OCI-LY7 (cell line): ENCODE measurements at regions of chr22 and their contacts with region 1.

Region 1: GRCh38 chr22:28791841-28792490 is 8.4 kb downstream of the XBP1 start:
- DNase-seq: peak; percentile 95
- H3K4me3 ChIP-seq: peak overlapping the region; percentile 33
- H3K27ac ChIP-seq: peak overlapping the region; percentile 58
- H3K4me1 ChIP-seq: peaks cover 33% of the 10 kb centered on the region
- CTCF ChIP-seq: no peak

Region 2: GRCh38 chr22:27990879-27991278 is 801.1 kb before region 1 on chr22:
- CTCF ChIA-PET with region 1: no interaction called
- POLR2A ChIA-PET with region 1: no interaction called
- intact Hi-C with region 1: loop called (anchors 2 kb)
- DNase-seq: peak; percentile 67
- H3K4me3 ChIP-seq: peak overlapping the region; percentile 47
- H3K27ac ChIP-seq: peak overlapping the region; percentile 96
- H3K4me1 ChIP-seq: peaks cover 88% of the 10 kb centered on the region
- CTCF ChIP-seq: peak; percentile 77

Region 3: GRCh38 chr22:28817919-28818909 is 26.2 kb after region 1 on chr22:
- CTCF ChIA-PET with region 1: no interaction called
- POLR2A ChIA-PET with region 1: interaction called, 7 read pairs
- intact Hi-C with region 1: loop called (anchors 1 kb)
- DNase-seq: peak; percentile 46
- H3K4me3 ChIP-seq: no peak overlapping the region
- H3K27ac ChIP-seq: peak overlapping the region; percentile 7
- H3K4me1 ChIP-seq: peaks cover 46% of the 10 kb centered on the region
- CTCF ChIP-seq: no peak

Region 4: GRCh38 chr22:28829358-28830181 is 37.6 kb after region 1 on chr22:
- CTCF ChIA-PET with region 1: no interaction called
- POLR2A ChIA-PET with region 1: interaction called, 7 read pairs
- intact Hi-C with region 1: loop called (anchors 1 kb)
- DNase-seq: peak; percentile 84
- H3K4me3 ChIP-seq: no peak overlapping the region
- H3K27ac ChIP-seq: no peak overlapping the region
- H3K4me1 ChIP-seq: peaks cover 5% of the 10 kb centered on the region
- CTCF ChIP-seq: peak; percentile 99

Region 5: DNA sequence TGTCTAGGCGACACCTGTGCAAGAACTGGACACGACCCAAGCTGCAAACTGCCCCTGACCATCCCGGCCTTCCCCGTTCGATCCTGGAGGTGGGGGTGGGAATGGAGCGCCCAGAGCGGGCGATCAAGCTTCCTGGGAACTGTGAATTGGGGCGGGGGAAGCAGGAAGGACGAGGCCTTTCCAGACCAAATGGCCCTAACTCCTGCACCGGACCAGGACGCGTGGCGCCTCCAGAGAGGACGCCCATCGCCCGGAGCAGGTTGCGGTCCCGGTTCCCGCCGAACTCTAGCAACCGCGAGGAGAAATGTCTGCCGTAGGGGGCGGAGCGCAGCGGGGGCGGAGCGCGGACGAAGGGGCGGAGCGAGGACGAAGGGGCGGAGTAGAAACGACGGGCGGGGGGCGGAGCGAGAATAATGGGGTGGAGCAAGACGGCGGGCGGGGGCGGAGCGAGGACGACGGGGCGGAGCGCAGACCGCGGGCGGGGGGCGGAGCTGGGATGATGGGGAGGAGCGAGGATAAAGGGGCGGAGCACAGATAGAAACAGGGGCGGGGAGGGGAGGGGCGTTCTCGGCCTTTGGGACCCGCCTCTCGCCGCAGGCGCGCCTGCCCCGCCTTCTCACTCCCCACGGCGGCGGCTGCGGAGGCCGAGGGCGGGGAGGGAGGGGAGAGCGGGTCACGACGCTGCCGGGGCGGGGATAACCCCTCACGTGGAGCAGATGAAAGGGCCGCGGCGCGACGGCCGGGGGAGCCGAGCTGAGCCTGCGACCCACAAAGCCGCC is 91.1 kb after region 1 on chr22 and contains the start of gene ZNRF3:
- CTCF ChIA-PET with region 1: no interaction called
- POLR2A ChIA-PET with region 1: no interaction called
- intact Hi-C with region 1: loop called (anchors 5 kb)
- DNase-seq: peak; percentile 90
- H3K4me3 ChIP-seq: peak within 1 kb of the TSS; percentile 69
- H3K27ac ChIP-seq: no peak within 1 kb of the TSS
- H3K4me1 ChIP-seq: peaks cover 15% of the 10 kb centered on the region
- CTCF ChIP-seq: no peak
- total RNA-seq, gene ZNRF3: 1.2 and 3.6 TPM in 2 replicates

Region 6: DNA sequence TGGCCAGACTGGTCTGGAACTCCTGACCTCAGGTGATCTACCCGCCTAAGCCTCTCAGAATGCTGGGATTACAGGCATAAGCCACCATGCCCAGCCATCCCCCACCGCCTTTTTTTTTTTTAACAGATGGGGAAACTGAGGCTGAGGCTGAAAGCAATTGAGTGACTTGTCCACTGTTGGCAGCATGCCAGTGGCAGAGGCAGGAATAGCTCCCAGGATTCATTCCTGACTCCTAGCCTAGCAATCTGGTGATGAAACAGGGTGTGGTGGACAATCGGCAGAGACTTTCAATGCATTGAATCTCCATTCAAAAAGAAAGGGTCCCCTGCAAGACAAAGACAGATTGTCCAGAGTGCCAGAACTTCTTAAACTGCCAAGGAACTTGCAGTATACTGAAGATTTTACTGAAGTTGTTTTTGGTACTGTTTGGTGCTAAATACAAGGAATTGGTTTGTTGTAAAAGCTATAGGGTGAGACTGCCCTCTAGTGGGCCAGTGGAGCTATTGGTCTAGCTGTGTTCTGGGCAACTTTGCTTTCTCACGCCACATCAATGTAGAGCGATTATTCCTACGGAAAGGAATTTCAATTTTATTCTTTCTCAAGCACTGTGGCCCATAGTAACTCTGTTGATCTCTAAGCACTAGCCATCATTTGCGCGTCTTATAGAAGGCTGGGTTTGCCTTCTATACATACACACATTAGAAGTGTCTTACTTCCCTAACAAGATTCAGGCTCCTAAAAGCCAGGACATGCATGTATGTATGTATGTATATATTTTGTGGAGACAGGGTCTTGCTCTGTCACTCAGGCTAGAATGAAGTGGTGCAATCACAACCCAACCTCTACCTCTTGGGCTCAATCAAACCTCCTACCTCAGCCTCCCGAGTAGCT is 248.7 kb after region 1 on chr22:
- CTCF ChIA-PET with region 1: no interaction called
- POLR2A ChIA-PET with region 1: no interaction called
- intact Hi-C with region 1: no loop called
- DNase-seq: peak; percentile 76
- H3K4me3 ChIP-seq: no peak overlapping the region
- H3K27ac ChIP-seq: no peak overlapping the region
- H3K4me1 ChIP-seq: no peaks in the 10 kb centered on the region
- CTCF ChIP-seq: peak; percentile 99